RWPE1 (cell line): ENCODE measurements at regions of chr9 and their contacts with region 1.

Region 1: DNA sequence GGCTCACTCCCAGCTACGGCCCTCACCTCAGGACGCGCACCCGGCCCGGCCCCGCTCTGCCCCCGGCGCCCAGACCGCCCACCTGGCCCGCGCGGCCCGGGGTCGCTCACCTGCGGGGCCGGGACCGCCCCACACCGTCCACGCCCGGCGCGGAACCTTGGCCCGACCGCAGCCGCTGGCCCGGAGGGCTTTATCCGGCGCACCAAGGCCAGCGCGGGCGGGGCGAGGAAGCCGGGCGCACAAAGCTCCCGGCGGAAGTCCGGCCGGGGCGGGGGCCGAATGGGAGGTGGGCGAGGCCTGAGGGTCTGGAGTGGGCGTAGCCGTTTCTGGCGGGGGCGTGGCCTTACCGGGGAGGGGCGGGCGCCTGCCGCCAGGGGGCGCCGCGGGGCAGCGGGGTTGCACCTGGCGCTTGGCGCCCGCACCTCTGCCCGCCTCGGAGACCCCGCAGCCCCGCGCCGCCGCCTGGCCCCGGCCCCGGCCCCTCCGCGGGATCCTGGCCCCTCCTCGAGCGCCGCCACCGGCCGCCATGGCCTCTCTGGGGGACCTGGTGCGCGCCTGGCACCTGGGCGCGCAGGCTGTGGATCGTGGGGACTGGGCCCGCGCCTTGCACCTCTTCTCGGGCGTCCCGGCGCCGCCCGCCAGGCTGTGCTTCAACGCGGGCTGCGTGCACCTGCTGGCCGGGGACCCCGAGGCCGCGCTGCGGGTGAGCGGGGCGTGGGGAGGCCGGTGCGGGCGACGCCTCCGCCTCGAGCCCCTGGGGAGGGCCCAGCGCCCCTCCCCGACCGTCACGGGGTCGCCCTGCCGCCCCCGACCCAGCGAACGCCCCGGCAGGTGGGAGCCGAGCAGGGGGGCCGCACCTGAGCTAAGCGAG is at the starts of genes EXD3 and NOXA1:
- DNase-seq: peak; percentile 98
- H3K27ac ChIP-seq: peak within 1 kb of the TSS; percentile 83
- CTCF ChIP-seq: peak; percentile 99

Region 2: DNA sequence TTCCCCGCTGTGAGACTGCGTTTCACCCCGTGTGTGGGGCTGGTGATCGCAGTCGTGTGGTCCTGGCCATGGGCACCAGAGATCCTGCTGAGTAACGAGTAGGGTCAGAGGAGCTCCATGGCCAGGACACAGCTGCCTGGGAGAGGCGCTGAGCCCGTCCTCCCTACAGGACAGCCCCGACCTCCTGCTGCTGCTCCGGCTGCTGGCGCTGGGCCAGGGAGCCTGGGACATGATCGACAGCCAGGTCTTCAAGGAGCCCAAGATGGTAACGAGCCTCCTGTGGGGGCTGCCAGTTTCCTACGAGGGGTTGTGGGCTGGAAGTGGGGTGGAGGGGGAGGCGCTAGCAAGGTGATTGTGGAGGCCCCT is 157.1 kb before region 1 on chr9:
- CTCF ChIA-PET with region 1: no interaction called
- POLR2A ChIA-PET with region 1: interaction called, 16 read pairs
- DNase-seq: no peak
- H3K27ac ChIP-seq: peak overlapping the region; percentile 94
- CTCF ChIP-seq: no peak

Region 3: DNA sequence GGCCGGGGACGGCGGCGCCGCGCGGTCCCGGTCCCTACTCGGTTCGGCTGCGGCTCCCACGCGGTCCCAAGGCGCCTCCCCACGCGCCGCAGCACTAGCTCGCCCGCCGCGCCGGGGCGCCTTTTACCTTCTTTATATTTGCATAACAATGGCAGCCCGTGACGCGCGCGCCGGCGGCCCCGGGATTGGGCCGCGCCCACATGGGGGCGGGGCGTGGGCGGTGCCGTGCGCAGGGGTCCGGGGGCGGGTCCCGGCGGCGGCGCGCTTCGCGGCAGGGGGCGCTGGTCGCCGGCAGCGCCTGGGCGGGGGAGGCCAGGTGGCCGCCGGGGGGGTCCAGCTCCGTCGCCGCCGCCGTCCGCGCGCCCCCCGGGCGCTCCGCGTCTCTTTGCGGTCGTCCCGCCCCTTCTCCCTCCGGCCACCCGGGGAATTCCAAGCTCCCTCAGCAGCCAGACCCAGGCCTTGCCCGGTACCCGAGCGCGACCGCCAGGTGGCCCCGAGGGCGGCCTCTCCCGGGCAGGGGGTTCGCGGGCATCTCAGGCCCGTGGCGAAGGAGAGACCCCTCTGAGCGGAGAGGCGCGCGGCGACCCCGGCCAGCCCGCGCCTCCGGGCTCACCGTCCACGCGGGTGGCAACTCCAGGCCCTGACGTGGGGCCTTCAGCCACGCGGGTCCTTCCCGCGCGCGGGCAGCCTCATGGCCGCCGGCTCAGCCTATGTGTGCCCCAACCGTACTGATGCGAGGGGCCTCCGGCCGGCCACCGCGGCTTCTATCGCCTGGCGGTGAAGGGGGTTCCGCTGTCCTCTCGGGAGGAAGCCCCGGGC is 120.9 kb before region 1 on chr9 and contains the start of gene NRARP:
- CTCF ChIA-PET with region 1: interaction called, 5 read pairs
- POLR2A ChIA-PET with region 1: interaction called, 12 read pairs
- DNase-seq: peak; percentile 95
- H3K27ac ChIP-seq: peak within 1 kb of the TSS; percentile 92
- CTCF ChIP-seq: peak; percentile 92

Region 4: GRCh38 chr9:137382444-137383080 is 40.7 kb before region 1 on chr9:
- CTCF ChIA-PET with region 1: no interaction called
- POLR2A ChIA-PET with region 1: no interaction called
- DNase-seq: no peak
- H3K27ac ChIP-seq: no peak overlapping the region
- CTCF ChIP-seq: no peak

Region 5: DNA sequence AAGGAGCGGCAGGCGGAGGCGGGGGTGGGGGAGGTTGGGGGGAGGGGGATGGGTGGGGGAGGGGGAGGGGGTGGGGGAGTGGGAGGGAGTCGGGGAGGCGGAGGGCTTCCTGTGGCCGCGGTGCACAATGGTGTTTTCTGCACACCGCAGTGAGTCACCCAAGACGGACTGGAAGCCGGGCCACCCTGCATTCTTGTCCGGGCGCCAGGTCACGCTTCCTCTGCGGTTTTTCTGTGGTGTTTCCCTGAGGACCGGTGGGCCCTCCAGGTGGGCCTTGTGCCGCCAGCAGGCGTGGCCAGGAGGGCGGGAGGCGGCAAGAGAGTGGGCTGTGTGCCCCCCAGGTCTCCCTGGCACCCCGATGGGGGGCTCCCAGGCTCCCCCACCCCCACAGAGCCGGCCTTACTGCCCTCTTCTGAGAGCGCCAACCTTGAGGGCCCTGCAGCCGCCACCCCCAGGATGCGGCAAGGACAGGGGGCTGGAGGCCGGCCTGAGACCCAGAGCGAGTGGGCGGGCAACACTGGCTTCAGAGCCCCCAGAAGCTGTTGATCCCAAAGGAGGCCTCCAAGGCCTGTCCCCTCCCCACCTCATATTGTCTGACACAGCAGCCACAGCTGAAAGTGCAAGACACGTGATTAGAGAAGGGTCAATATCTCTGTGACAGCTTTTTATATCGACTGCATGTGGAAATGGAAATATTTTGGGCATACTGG is 11.4 kb before region 1 on chr9:
- CTCF ChIA-PET with region 1: interaction called, 16 read pairs
- POLR2A ChIA-PET with region 1: interaction called, 5 read pairs
- DNase-seq: peak; percentile 97
- H3K27ac ChIP-seq: peak overlapping the region; percentile 93
- CTCF ChIP-seq: no peak

Region 6: GRCh38 chr9:137445275-137445807 is 22.1 kb after region 1 on chr9:
- CTCF ChIA-PET with region 1: interaction called, 13 read pairs
- POLR2A ChIA-PET with region 1: interaction called, 5 read pairs
- DNase-seq: peak; percentile 87
- H3K27ac ChIP-seq: peak overlapping the region; percentile 40
- CTCF ChIP-seq: peak; percentile 99

Region 7: DNA sequence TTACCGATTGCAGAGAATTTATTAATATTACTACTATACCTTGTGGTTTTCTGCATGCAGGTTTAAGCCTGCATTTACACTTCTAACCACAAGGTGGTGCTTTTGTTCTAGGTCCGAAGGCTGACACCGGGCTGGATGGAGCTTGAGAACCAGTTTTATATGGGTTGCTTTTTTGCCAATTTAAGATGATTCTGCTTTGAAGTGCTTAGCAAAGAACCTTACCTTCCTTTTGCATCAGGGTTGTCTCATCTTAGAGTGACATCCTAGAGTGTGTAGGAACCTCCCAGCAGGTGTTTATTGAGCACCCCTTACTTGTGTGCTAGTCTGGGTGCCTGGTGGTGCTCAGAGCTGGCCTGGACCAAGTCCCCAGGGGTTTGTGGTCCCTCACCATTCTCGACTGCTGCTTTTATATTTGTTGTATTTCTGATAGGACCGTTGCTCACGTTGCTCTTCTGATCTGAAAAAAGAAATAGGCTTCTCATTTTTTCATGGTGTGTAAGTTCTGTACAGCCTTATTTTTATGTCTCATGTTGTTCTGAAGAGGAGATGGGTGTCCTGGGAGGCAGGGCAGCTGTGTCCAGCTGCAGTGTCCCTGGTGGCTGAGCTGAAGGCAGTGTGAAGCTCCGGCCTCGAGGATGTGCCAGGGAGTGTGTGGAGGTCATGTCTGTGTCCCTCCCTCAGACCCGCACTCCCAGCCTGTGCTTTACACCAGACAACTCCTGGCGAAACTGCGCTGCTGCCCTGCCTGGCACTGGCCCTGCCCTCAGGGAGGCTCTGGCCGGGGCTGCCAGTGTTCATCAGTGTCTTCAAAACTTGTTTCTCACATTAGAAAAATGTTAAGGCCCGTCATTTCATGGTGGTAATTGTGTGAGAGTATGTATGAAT is 249.9 kb after region 1 on chr9:
- CTCF ChIA-PET with region 1: no interaction called
- POLR2A ChIA-PET with region 1: no interaction called
- DNase-seq: peak; percentile 82
- H3K27ac ChIP-seq: peak overlapping the region; percentile 33
- CTCF ChIP-seq: peak; percentile 99